ENCODE measurements at regions of chr9 and their contacts with region 1.

Region 1: GRCh38 chr9:21395778-21396717 is 10.8 kb upstream of the IFNA2 start:
- DNase-seq: peak; percentile 50 to 60 (median 52)
- H3K4me3 ChIP-seq: peak overlapping the region; percentile 19 to 41
- H3K4me3 Mint-ChIP-seq: peak overlapping the region; percentile 61 to 88 (median 78)
- H3K27ac ChIP-seq: no peak overlapping the region
- H3K27ac Mint-ChIP-seq: peak overlapping the region in 2 of 7 donors; percentile 4 to 36
- H3K4me1 ChIP-seq: peaks cover 4% of the 10 kb centered on the region
- H3K4me1 Mint-ChIP-seq: peaks cover 5 to 13% (median 10%) of the 10 kb centered on the region in 4 donors
- H3K27me3 ChIP-seq: peaks cover 14% of the 10 kb centered on the region
- H3K27me3 Mint-ChIP-seq: peaks cover 41 to 46% of the 10 kb centered on the region in 2 donors

Region 2: GRCh38 chr9:21154018-21154608 is 241.9 kb before region 1 on chr9:
- CTCF ChIA-PET with region 1: interaction called, 32 read pairs
- POLR2A ChIA-PET with region 1: no interaction called
- intact Hi-C with region 1: loop called (anchors 1 kb)
- DNase-seq: peak in 4 of 5 donors; percentile 6 to 27 (median 22)
- H3K4me3 ChIP-seq: no peak overlapping the region
- H3K4me3 Mint-ChIP-seq: peak overlapping the region in 1 of 8 donors; percentile 59
- H3K27ac ChIP-seq: no peak overlapping the region
- H3K27ac Mint-ChIP-seq: peak overlapping the region in 2 of 7 donors; percentile 58 to 59
- H3K4me1 ChIP-seq: peaks cover 4% of the 10 kb centered on the region
- H3K4me1 Mint-ChIP-seq: peaks cover 4 to 9% (median 7%) of the 10 kb centered on the region in 4 donors
- H3K27me3 ChIP-seq: no peaks in the 10 kb centered on the region
- H3K27me3 Mint-ChIP-seq: peaks cover 0 to 1% of the 10 kb centered on the region in 2 donors

Region 3: GRCh38 chr9:21234153-21234687 is 161.8 kb before region 1 on chr9:
- CTCF ChIA-PET with region 1: interaction called, 21 read pairs
- POLR2A ChIA-PET with region 1: interaction called, 3 read pairs
- intact Hi-C with region 1: loop called (anchors 5 kb)
- DNase-seq: no peak
- H3K4me3 ChIP-seq: no peak overlapping the region
- H3K4me3 Mint-ChIP-seq: no peak overlapping the region
- H3K27ac ChIP-seq: no peak overlapping the region
- H3K27ac Mint-ChIP-seq: peak overlapping the region in 1 of 7 donors; percentile 11
- H3K4me1 ChIP-seq: peaks cover 5% of the 10 kb centered on the region
- H3K4me1 Mint-ChIP-seq: peaks cover 4 to 12% (median 7%) of the 10 kb centered on the region in 4 donors
- H3K27me3 ChIP-seq: no peaks in the 10 kb centered on the region
- H3K27me3 Mint-ChIP-seq: peaks cover 2 to 4% of the 10 kb centered on the region in 2 donors

Region 4: GRCh38 chr9:21239911-21240310 is 156.1 kb before region 1 on chr9 and contains the start of gene IFNA14:
- CTCF ChIA-PET with region 1: interaction called, 21 read pairs
- POLR2A ChIA-PET with region 1: interaction called, 3 read pairs
- intact Hi-C with region 1: loop called (anchors 5 kb)
- DNase-seq: no peak
- H3K4me3 ChIP-seq: no peak within 1 kb of the TSS
- H3K4me3 Mint-ChIP-seq: no peak within 1 kb of the TSS
- H3K27ac ChIP-seq: no peak within 1 kb of the TSS
- H3K27ac Mint-ChIP-seq: no peak within 1 kb of the TSS
- H3K4me1 ChIP-seq: peaks cover 5% of the 10 kb centered on the region
- H3K4me1 Mint-ChIP-seq: peaks cover 4 to 12% (median 7%) of the 10 kb centered on the region in 4 donors
- H3K27me3 ChIP-seq: no peaks in the 10 kb centered on the region
- H3K27me3 Mint-ChIP-seq: peaks cover 2 to 15% of the 10 kb centered on the region in 2 donors
- total RNA-seq, gene IFNA14: not detected

Region 5: GRCh38 chr9:21317956-21318923 is 77.8 kb before region 1 on chr9:
- CTCF ChIA-PET with region 1: interaction called, 227 read pairs
- POLR2A ChIA-PET with region 1: interaction called, 5 read pairs
- intact Hi-C with region 1: loop called (anchors 1 kb)
- DNase-seq: peak; percentile 17 to 40 (median 33)
- H3K4me3 ChIP-seq: no peak overlapping the region
- H3K4me3 Mint-ChIP-seq: no peak overlapping the region
- H3K27ac ChIP-seq: no peak overlapping the region
- H3K27ac Mint-ChIP-seq: peak overlapping the region in 6 of 7 donors; percentile 17 to 87 (median 70)
- H3K4me1 ChIP-seq: no peaks in the 10 kb centered on the region
- H3K4me1 Mint-ChIP-seq: peaks cover 0 to 5% (median 3%) of the 10 kb centered on the region in 4 donors
- H3K27me3 ChIP-seq: no peaks in the 10 kb centered on the region
- H3K27me3 Mint-ChIP-seq: no peaks in the 10 kb centered on the region

Region 6: DNA sequence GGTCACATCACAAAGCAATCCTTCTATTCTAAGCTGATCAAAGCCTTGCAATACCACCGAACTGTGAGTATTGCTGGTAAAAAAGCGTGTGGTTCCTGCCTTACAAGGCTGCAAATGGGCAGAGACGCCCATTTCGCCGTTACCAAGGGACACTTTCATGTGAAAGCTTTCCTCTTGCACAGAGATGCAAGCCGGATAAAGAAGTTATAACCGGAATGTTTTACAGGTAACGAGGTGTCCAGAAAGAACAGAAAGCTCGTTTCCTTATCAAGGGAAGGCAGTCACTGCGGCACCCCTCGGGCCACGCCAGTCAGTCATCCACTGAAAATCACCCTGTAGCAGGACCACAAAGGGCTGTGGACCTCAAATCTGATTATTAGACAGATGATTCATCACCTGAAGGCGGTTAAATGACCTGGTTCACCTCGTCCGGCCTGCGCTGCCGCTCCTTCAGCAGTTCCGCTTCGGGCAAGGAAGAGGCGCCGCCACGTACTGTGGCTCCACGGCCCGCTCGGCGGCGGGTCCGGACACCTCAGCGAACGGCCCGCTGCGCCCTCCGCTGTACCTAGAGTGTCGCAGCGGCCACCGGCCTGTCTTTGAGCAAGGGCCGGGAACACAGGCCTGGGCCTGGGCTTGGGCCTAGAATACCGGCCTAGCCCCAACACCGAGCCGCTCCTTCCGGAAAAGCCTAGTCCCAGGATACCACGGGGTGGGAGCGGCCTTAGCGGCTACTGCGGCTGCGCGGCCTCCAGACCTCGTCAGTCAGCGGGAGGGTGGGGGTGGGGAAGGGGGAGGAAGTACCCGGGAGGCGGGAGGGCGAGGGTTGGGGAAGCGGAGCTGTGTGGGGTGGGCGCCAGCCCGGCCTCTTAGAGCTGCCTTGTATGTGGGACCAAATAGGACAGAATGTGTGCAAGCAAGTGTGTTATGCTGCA is 61.1 kb before region 1 on chr9 and contains the start of gene KLHL9:
- CTCF ChIA-PET with region 1: interaction called, 69 read pairs
- POLR2A ChIA-PET with region 1: interaction called, 17 read pairs
- intact Hi-C with region 1: no loop called
- DNase-seq: peak; percentile 86 to 88 (median 88)
- H3K4me3 ChIP-seq: peak within 1 kb of the TSS; percentile 80 to 96
- H3K4me3 Mint-ChIP-seq: peak within 1 kb of the TSS; percentile 89 to 97 (median 94)
- H3K27ac ChIP-seq: peak within 1 kb of the TSS; percentile 98
- H3K27ac Mint-ChIP-seq: peak within 1 kb of the TSS; percentile 95 to 98 (median 97)
- H3K4me1 ChIP-seq: peaks cover 59% of the 10 kb centered on the region
- H3K4me1 Mint-ChIP-seq: peaks cover 37 to 69% (median 49%) of the 10 kb centered on the region in 4 donors
- H3K27me3 ChIP-seq: no peaks in the 10 kb centered on the region
- H3K27me3 Mint-ChIP-seq: peaks cover 0 to 3% of the 10 kb centered on the region in 2 donors
- total RNA-seq, gene KLHL9: 38.7 to 40.1 TPM

Region 7: GRCh38 chr9:21385131-21385670 is 10.8 kb before region 1 on chr9 and contains the start of gene IFNA2:
- CTCF ChIA-PET with region 1: interaction called, 10 read pairs
- POLR2A ChIA-PET with region 1: no interaction called
- intact Hi-C with region 1: no loop called
- DNase-seq: no peak
- H3K4me3 ChIP-seq: no peak within 1 kb of the TSS
- H3K4me3 Mint-ChIP-seq: no peak within 1 kb of the TSS
- H3K27ac ChIP-seq: no peak within 1 kb of the TSS
- H3K27ac Mint-ChIP-seq: peak within 1 kb of the TSS in 1 of 7 donors; percentile 19
- H3K4me1 ChIP-seq: peaks cover 8% of the 10 kb centered on the region
- H3K4me1 Mint-ChIP-seq: peaks cover 12 to 18% (median 12%) of the 10 kb centered on the region in 4 donors
- H3K27me3 ChIP-seq: peaks cover 16% of the 10 kb centered on the region
- H3K27me3 Mint-ChIP-seq: peaks cover 22 to 30% of the 10 kb centered on the region in 2 donors
- total RNA-seq, gene IFNA2: not detected